ENCODE measurements at regions of chr10 and their contacts with region 1.

Region 1: DNA sequence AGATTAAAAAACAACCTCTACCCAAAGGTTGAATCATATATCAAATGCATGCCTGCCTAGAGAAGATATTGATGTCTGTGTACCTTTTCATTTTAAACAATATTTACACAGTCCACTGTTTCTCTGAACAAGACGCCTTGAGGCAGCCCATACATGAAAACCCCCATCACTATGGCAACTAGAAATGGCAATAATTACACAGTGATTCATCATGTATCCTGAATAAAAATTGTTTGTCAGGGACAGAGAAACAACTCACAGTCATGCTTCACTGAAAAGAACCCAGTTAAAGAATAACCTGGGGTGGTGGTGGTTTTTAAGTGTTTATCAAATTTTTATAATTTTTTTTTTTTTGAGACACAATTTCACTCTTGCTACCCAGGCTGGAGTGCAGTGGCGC is 19.7 kb downstream of the DNAJC12 start:
- DNase-seq: peak; percentile 100
- ATAC-seq: peak; percentile 75
- H3K4me3 ChIP-seq: peak overlapping the region; percentile 19; the same call in 1 of the 2 replicates
- H3K27ac ChIP-seq: peak overlapping the region; percentile 91
- H3K4me1 ChIP-seq: peaks cover 70% of the 10 kb centered on the region
- H3K27me3 ChIP-seq: no peaks in the 10 kb centered on the region
- CTCF ChIP-seq: no peak

Region 2: GRCh38 chr10:67764012-67764822 is 54.1 kb before region 1 on chr10:
- CTCF ChIA-PET with region 1: no interaction called
- POLR2A ChIA-PET with region 1: no interaction called
- intact Hi-C with region 1: loop called (anchors 2 kb)
- DNase-seq: peak; percentile 100
- ATAC-seq: peak; percentile 79
- H3K4me3 ChIP-seq: peak overlapping the region; percentile 82
- H3K27ac ChIP-seq: no peak overlapping the region; the same call in 1 of the 2 replicates
- H3K4me1 ChIP-seq: peaks cover 16% of the 10 kb centered on the region
- H3K27me3 ChIP-seq: peaks cover 10% of the 10 kb centered on the region
- CTCF ChIP-seq: no peak

Region 3: DNA sequence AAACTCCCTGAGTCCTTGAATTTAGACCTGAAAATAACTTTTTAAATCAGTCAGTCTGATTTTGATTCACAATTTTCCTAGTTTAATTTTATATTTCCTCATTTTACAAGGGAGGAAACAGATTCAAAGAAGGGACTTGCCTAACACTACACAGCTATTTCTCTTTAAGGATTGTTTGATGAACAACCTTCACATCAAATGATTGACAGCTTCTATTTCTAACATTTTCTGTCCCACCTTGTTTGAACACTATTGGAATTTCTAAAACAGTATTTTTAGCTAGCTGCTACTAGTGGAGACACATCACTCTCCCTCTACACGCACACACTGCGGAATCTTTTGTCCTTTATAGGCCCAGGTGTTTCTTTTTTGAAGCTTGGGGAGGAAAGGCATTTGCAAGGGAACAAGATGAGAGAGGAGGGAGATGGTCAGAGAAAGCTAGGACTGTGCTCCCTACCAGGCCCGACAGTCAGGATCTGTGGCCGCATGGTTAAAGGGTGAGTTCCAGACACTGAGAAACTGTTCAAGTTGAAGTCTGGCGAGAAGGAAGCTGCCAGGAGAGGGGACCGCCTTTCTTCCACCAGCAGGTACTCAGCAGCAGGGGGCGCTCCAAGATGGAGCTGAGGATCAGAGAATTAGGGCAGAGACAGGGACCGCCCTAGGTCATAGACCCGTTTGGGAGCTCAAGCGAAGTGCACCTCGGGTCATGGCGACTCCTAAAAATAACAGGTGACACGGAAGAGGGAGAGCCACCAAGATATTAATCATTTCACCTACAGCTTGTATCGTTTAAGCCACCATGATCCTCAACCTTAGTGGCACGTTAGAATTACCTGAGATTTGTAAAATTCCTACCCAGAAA is 30.1 kb before region 1 on chr10:
- CTCF ChIA-PET with region 1: interaction called, 11 read pairs
- POLR2A ChIA-PET with region 1: interaction called, 3 read pairs
- intact Hi-C with region 1: loop called (anchors 1 kb)
- DNase-seq: peak; percentile 94
- ATAC-seq: peak; percentile 89
- H3K4me3 ChIP-seq: no peak overlapping the region
- H3K27ac ChIP-seq: no peak overlapping the region
- H3K4me1 ChIP-seq: peaks cover 8% of the 10 kb centered on the region; the same call in 1 of the 2 replicates
- H3K27me3 ChIP-seq: no peaks in the 10 kb centered on the region
- CTCF ChIP-seq: peak; percentile 99

Region 4: DNA sequence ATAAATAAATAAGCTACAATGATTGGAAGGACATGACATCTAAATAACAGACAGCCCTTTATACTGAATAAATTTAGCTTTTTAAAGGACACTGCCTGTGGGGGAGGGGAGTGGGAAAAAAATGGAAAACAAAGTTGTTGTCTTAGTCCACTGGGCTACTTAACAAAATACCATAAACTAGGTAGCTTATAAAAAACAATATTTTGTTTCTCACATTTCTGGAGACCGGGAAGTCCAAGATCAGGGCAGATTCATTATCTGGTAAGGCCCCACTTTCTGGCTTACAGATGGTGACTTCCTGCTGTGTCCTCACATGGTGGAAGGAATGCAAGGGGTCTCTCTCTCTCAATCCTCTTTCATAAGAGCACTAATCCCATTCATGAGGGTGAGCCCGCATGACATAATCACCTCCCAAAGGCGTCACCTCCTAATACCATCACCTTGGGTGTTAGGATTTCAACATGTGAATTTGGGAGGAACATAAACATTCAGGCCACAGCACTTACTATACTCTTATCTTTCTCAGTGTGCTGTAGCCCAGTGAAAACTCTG is 23.3 kb before region 1 on chr10:
- CTCF ChIA-PET with region 1: interaction called, 4 read pairs
- POLR2A ChIA-PET with region 1: interaction called, 11 read pairs
- intact Hi-C with region 1: no loop called
- DNase-seq: no peak
- ATAC-seq: no peak
- H3K4me3 ChIP-seq: no peak overlapping the region
- H3K27ac ChIP-seq: no peak overlapping the region
- H3K4me1 ChIP-seq: no peaks in the 10 kb centered on the region
- H3K27me3 ChIP-seq: no peaks in the 10 kb centered on the region
- CTCF ChIP-seq: no peak

Region 5: GRCh38 chr10:67837541-67838314 is 19.4 kb after region 1 on chr10 and contains the start of gene DNAJC12:
- CTCF ChIA-PET with region 1: interaction called, 4 read pairs
- POLR2A ChIA-PET with region 1: interaction called, 15 read pairs
- intact Hi-C with region 1: loop called (anchors 1 kb)
- DNase-seq: peak; percentile 78
- ATAC-seq: peak; percentile 85
- H3K4me3 ChIP-seq: peak within 1 kb of the TSS; percentile 42
- H3K27ac ChIP-seq: peak within 1 kb of the TSS; percentile 63
- H3K4me1 ChIP-seq: peaks cover 34% of the 10 kb centered on the region
- H3K27me3 ChIP-seq: no peaks in the 10 kb centered on the region
- CTCF ChIP-seq: no peak
- total RNA-seq, gene DNAJC12: 14.2 and 15.5 TPM in 2 replicates

Region 6: GRCh38 chr10:67914777-67915340 is 96.5 kb after region 1 on chr10:
- CTCF ChIA-PET with region 1: no interaction called
- POLR2A ChIA-PET with region 1: no interaction called
- intact Hi-C with region 1: no loop called
- DNase-seq: no peak
- ATAC-seq: no peak
- H3K4me3 ChIP-seq: no peak overlapping the region
- H3K27ac ChIP-seq: no peak overlapping the region
- H3K4me1 ChIP-seq: 0 out of 2 replicates have a peak, but pooled peaks cover 4% of the 10 kb centered on the region
- H3K27me3 ChIP-seq: no peaks in the 10 kb centered on the region
- CTCF ChIP-seq: no peak

Region 7: GRCh38 chr10:68096913-68097503 is 278.7 kb after region 1 on chr10:
- CTCF ChIA-PET with region 1: no interaction called
- POLR2A ChIA-PET with region 1: no interaction called
- intact Hi-C with region 1: loop called (anchors 5 kb)
- DNase-seq: peak; percentile 99
- ATAC-seq: peak; percentile 75
- H3K4me3 ChIP-seq: peak overlapping the region; percentile 10; the same call in 1 of the 2 replicates
- H3K27ac ChIP-seq: peak overlapping the region; percentile 94
- H3K4me1 ChIP-seq: peaks cover 95% of the 10 kb centered on the region
- H3K27me3 ChIP-seq: no peaks in the 10 kb centered on the region
- CTCF ChIP-seq: no peak

Region 8: GRCh38 chr10:68135922-68136718 is 317.8 kb after region 1 on chr10:
- CTCF ChIA-PET with region 1: no interaction called
- POLR2A ChIA-PET with region 1: no interaction called
- intact Hi-C with region 1: loop called (anchors 5 kb)
- DNase-seq: peak; percentile 99
- ATAC-seq: peak; percentile 85
- H3K4me3 ChIP-seq: peak overlapping the region; percentile 39
- H3K27ac ChIP-seq: peak overlapping the region; percentile 88
- H3K4me1 ChIP-seq: peaks cover 63% of the 10 kb centered on the region
- H3K27me3 ChIP-seq: no peaks in the 10 kb centered on the region
- CTCF ChIP-seq: no peak

Region 9: GRCh38 chr10:68301790-68302502 is 483.6 kb after region 1 on chr10:
- CTCF ChIA-PET with region 1: no interaction called
- POLR2A ChIA-PET with region 1: no interaction called
- intact Hi-C with region 1: no loop called
- DNase-seq: peak; percentile 94
- ATAC-seq: peak; percentile 91
- H3K4me3 ChIP-seq: no peak overlapping the region
- H3K27ac ChIP-seq: no peak overlapping the region
- H3K4me1 ChIP-seq: peaks cover 8% of the 10 kb centered on the region; the same call in 1 of the 2 replicates
- H3K27me3 ChIP-seq: no peaks in the 10 kb centered on the region
- CTCF ChIP-seq: peak; percentile 97

Measured in PC-3 (cell line).